BJ (cell line): ENCODE measurements at regions of chr10 and their contacts with region 1.

Region 1: DNA sequence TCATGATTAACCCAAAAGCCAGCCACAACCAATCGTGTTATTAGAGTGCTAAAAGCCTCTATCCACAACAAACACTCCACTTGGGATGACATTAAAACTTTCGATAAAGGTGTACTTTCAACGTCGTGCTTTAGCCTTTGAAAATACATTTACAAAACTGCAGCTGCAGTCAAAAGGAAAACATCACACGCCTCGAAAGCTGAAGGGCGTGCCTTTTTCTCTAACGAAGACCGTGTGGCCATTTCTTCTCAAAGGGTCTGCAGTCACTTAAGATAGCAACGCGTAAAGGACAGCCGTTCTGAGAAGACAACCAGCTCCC is 1.1 kb downstream of the ARHGAP12 start:
- DNase-seq: no peak
- H3K4me3 ChIP-seq: peak overlapping the region; percentile 73
- H3K27me3 ChIP-seq: no peaks in the 10 kb centered on the region
- CTCF ChIP-seq: no peak

Region 2: GRCh38 chr10:31875608-31876007 is 51.9 kb before region 1 on chr10:
- CTCF ChIA-PET with region 1: interaction called, 3 read pairs
- POLR2A ChIA-PET with region 1: interaction called, 10 read pairs
- DNase-seq: no peak
- H3K4me3 ChIP-seq: no peak overlapping the region
- H3K27me3 ChIP-seq: no peaks in the 10 kb centered on the region
- CTCF ChIP-seq: no peak

Region 3: GRCh38 chr10:31912898-31913852 is 14.3 kb before region 1 on chr10:
- CTCF ChIA-PET with region 1: interaction called, 5 read pairs
- POLR2A ChIA-PET with region 1: interaction called, 20 read pairs
- DNase-seq: no peak
- H3K4me3 ChIP-seq: no peak overlapping the region
- H3K27me3 ChIP-seq: no peaks in the 10 kb centered on the region
- CTCF ChIP-seq: no peak